ENCODE measurements at regions of chr10 and their contacts with region 1.

Region 1: DNA sequence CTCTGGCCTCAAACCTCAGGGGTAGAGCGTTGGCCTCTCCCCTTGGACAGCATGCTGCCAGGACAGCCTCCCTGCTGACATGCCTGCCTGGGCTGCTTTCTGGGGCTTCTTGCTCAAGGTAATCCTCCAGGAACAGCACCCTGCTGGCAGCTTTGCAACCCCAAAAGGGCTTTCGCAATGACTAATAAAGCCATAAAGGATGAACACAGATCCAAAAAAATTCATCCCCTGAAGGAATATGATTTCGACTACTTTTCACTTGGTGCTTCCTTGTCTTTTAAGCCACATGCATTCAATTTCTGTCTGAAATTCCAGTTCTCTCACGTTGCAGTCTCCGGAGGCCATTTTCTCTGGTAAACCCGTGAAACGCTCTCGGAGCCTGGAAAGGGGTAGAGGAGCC is 15.1 kb upstream of the SH3PXD2A start:
- DNase-seq: peak; percentile 61
- H3K4me3 ChIP-seq: no peak overlapping the region
- H3K27ac ChIP-seq: no peak overlapping the region
- H3K4me1 ChIP-seq: peaks cover 10% of the 10 kb centered on the region
- H3K27me3 ChIP-seq: no peaks in the 10 kb centered on the region
- CTCF ChIP-seq: no peak

Region 2: GRCh38 chr10:103350501-103351260 is 519.8 kb before region 1 on chr10 and contains the start of gene PCGF6:
- CTCF ChIA-PET with region 1: interaction called, 17 read pairs
- POLR2A ChIA-PET with region 1: no interaction called
- intact Hi-C with region 1: no loop called
- DNase-seq: peak; percentile 91
- H3K4me3 ChIP-seq: peak within 1 kb of the TSS; percentile 81
- H3K27ac ChIP-seq: peak within 1 kb of the TSS; percentile 90
- H3K4me1 ChIP-seq: peaks cover 10% of the 10 kb centered on the region
- H3K27me3 ChIP-seq: no peaks in the 10 kb centered on the region
- CTCF ChIP-seq: no peak
- total RNA-seq, gene PCGF6: 22.5 and 25.3 TPM in 2 replicates